ENCODE measurements at regions of chr4 and their contacts with region 1.

Region 1: DNA sequence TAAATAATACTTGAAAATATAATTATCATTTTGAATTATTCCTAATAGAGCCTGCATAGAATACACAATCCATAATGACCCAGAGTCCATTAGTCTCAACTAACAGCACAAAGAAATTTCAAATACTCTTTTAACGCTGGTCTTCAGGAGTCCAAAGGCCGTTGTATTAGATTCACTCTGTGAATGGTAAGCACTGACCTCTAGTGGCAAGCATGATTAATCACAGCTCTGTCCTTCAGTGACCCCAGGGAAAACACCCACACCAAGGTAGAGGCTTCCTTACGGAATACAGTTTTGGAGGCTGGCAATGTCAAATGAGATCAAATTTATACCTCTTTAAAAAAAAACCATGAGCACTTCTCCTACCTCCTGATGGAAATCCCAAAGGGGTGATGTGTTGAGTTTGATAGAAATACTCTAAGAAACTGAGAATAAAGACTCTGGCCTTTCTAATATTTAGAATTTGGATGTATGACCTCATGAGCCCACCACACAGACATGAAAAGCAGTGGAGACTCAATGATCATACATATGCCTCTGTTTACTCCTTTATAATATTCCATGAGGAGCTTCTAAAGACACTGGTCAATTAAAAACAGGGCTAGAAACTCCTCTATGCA is 147.2 kb upstream of the DKK2 start:
- DNase-seq: peak; percentile 69
- H3K4me3 ChIP-seq: no peak overlapping the region
- H3K27ac ChIP-seq: no peak overlapping the region
- H3K4me1 ChIP-seq: no peaks in the 10 kb centered on the region
- H3K27me3 ChIP-seq: no peaks in the 10 kb centered on the region
- CTCF ChIP-seq: peak; percentile 63 to 70
- POLR2A ChIP-seq: no peak

Region 2: GRCh38 chr4:106329041-106329618 is 854.1 kb before region 1 on chr4:
- CTCF ChIA-PET with region 1: interaction called, 11 read pairs
- POLR2A ChIA-PET with region 1: no interaction called
- dilution Hi-C with region 1: no loop called
- intact Hi-C with region 1: no loop called
- DNase-seq: peak; percentile 69
- H3K4me3 ChIP-seq: no peak overlapping the region
- H3K27ac ChIP-seq: no peak overlapping the region
- H3K4me1 ChIP-seq: peaks cover 9% of the 10 kb centered on the region
- H3K27me3 ChIP-seq: no peaks in the 10 kb centered on the region
- CTCF ChIP-seq: peak; percentile 39 to 64
- POLR2A ChIP-seq: no peak

Region 3: DNA sequence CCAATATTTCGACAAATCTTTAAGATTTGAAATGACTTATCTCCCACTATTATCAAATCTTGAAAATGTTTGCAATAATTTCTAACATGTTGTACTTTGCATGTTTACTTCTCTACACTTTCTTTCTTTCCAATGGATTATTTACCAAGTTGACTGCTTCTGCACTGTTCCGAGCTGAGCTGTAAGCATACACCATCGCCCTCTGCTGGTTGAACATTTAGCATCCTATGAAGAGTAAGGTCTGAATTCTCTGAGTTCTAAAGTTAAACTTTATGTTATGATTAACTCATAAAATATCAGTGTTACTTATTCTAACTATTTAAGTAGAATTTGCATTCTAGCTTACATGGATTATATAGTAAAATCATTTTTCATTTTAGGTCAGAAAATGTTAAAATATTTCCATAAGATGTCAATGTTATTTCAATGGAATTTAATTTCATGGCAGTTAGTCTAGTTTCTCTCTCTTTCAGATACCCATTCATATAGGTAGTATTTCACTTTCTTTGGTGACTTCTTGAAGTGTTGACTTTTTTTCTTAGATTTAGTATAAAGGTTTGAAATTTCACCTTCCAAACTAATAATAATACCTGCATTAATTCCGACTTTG is 284.5 kb before region 1 on chr4:
- CTCF ChIA-PET with region 1: interaction called, 16 read pairs
- POLR2A ChIA-PET with region 1: no interaction called
- dilution Hi-C with region 1: no loop called
- intact Hi-C with region 1: loop called (anchors 1 kb)
- DNase-seq: peak; percentile 61
- H3K4me3 ChIP-seq: no peak overlapping the region
- H3K27ac ChIP-seq: no peak overlapping the region
- H3K4me1 ChIP-seq: no peaks in the 10 kb centered on the region
- H3K27me3 ChIP-seq: no peaks in the 10 kb centered on the region
- CTCF ChIP-seq: peak; percentile 65 to 69
- POLR2A ChIP-seq: no peak

Region 4: DNA sequence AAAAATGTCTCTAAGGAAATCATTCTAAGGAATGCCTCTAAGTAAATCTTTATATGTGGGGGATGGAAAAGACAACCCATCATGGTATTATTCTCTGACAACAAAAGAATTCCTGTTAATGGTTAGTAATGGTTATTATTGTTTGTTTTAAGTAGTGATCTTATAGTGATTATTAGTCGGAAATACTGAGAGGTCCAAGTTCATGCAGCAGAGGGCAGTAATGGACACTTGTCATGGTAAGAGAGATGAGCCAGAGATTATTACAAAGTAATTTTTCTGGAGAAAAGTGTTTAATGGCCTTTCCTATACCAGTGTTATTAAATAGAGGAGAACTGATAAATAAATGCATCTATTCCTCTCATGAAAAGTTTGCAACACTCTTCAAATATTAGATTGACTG is 139.1 kb before region 1 on chr4:
- CTCF ChIA-PET with region 1: interaction called, 202 read pairs
- POLR2A ChIA-PET with region 1: no interaction called
- dilution Hi-C with region 1: no loop called
- intact Hi-C with region 1: loop called (anchors 1 kb)
- DNase-seq: peak; percentile 35
- H3K4me3 ChIP-seq: no peak overlapping the region
- H3K27ac ChIP-seq: no peak overlapping the region
- H3K4me1 ChIP-seq: no peaks in the 10 kb centered on the region
- H3K27me3 ChIP-seq: no peaks in the 10 kb centered on the region
- CTCF ChIP-seq: peak; percentile 14 to 15
- POLR2A ChIP-seq: no peak

Region 5: GRCh38 chr4:107094332-107094731 is 88.9 kb before region 1 on chr4:
- CTCF ChIA-PET with region 1: interaction called, 79 read pairs
- POLR2A ChIA-PET with region 1: no interaction called
- dilution Hi-C with region 1: no loop called
- intact Hi-C with region 1: loop called (anchors 1 kb)
- DNase-seq: peak; percentile 50
- H3K4me3 ChIP-seq: no peak overlapping the region
- H3K27ac ChIP-seq: no peak overlapping the region
- H3K4me1 ChIP-seq: no peaks in the 10 kb centered on the region
- H3K27me3 ChIP-seq: no peaks in the 10 kb centered on the region
- CTCF ChIP-seq: peak; percentile 37 to 53
- POLR2A ChIP-seq: no peak

Region 6: DNA sequence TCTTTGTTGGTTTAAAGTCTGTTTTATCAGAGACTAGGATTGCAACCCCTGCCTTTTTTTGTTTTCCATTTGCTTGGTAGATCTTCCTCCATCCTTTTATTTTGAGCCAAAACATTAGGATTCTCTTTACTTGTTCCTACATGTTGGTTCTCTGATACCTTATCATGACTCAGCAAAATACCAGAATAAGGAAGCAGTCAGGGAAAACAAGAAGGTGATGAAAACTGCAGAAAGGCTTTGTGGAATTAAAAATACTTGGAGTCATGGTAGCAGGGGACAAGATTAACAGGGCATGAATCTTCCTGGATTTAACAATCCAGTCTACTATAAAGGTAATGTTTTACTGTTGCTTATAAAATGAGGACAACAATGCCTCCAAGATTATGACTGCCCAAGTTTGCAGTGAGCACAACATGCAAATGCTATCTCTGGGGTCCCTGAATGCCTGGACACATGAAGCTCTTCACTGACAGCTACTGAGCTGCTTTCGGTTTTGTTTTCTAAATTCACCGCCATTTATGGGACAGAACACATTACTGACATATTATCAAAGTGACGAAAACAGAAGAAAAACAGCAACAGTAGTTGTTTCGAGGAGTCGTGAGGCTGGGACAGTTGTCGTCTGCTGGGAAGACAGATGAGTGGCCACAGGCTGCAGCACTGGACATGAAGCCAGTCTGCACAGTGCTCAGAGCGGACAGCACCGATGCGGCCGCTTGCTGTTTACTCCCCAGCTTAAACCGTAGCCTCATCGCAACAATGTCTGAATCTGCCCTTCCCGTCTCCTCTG is 27.4 kb after region 1 on chr4:
- CTCF ChIA-PET with region 1: no interaction called
- POLR2A ChIA-PET with region 1: no interaction called
- dilution Hi-C with region 1: no loop called
- intact Hi-C with region 1: no loop called
- DNase-seq: no peak
- H3K4me3 ChIP-seq: no peak overlapping the region
- H3K27ac ChIP-seq: no peak overlapping the region
- H3K4me1 ChIP-seq: no peaks in the 10 kb centered on the region
- H3K27me3 ChIP-seq: peaks cover 0 to 2% of the 10 kb centered on the region in 2 experiments
- CTCF ChIP-seq: no peak
- POLR2A ChIP-seq: no peak

Region 7: DNA sequence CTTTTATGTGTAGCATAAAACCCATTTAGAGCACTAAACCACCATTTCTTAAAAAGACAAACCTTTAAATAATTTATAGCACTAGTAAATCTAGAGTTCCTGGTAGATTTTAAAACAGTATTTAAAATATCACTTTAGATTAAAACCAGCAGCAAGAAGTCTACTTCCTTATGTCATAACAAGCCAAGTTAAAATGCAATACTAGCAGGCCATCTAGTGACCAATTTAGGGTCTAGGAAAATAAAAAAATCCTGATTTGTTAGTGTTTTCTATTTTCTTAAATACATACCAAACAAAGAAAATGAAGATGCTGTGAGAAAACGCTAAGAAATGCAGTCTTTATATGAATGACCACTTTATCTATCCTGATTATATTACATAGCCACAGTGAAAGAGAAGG is 482.9 kb after region 1 on chr4:
- CTCF ChIA-PET with region 1: interaction called, 4 read pairs
- POLR2A ChIA-PET with region 1: no interaction called
- dilution Hi-C with region 1: no loop called
- intact Hi-C with region 1: loop called (anchors 2 kb)
- DNase-seq: peak; percentile 57
- H3K4me3 ChIP-seq: no peak overlapping the region
- H3K27ac ChIP-seq: no peak overlapping the region
- H3K4me1 ChIP-seq: peaks cover 3% of the 10 kb centered on the region
- H3K27me3 ChIP-seq: no peaks in the 10 kb centered on the region
- CTCF ChIP-seq: peak in 1 of 2 donors; percentile 0
- POLR2A ChIP-seq: no peak